Kidney (tissue), 22 donors: ENCODE measurements at regions of chr2 and their contacts with region 1.

Region 1: DNA sequence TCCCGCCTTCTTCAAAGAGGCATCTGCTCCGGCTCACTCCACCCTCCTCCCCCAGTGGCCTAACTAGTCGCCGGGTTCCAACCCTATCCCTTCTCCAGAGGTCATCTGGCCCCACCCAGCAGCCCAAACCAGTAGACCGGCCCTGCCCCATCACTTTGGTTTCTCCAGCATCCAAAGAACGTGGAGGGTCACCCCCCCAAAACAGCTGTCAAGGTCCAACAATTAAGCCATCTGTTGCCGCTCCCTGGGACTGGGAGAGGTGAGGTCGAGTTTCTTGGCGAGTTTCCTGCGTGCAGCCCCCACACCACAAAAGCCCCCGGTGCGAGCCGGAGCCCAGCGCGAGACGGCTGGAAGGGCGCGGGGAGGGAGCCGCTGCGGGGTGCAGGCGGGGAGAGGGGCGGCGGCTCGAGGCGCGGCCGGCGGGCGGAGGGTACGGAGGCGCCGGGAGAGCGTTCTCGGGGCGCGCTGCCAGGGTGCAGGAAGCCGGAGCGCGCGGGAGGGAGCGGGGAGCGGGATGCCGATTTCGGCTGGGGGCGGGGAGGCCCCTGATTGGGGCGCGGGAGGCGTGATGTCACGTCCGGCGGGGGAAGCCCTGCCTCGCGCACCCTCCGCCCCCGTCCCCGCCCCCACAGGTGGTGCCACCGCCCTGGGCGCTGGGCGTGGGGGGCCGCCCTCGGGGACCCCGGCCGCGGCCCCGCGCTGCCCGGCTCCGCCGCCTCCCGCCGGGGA is 571 bp upstream of the GPC1 start:
- DNase-seq: peak; percentile 92 to 98 (median 95)
- H3K4me3 ChIP-seq: peak overlapping the region in 1 of 3 donors; percentile 41
- H3K27ac ChIP-seq: no peak overlapping the region
- H3K4me1 ChIP-seq: peaks cover 0 to 9% (median 3%) of the 10 kb centered on the region in 3 donors
- H3K27me3 ChIP-seq: no peaks in the 10 kb centered on the region
- CTCF ChIP-seq: no peak

Region 2: GRCh38 chr2:240232961-240233893 is 201.7 kb before region 1 on chr2:
- intact Hi-C with region 1: loop called (anchors 5 kb)
- DNase-seq: peak; percentile 80 to 98 (median 86)
- H3K4me3 ChIP-seq: no peak overlapping the region
- H3K27ac ChIP-seq: no peak overlapping the region
- H3K4me1 ChIP-seq: peaks cover 0 to 7% (median 0%) of the 10 kb centered on the region in 3 donors
- H3K27me3 ChIP-seq: no peaks in the 10 kb centered on the region
- CTCF ChIP-seq: peak; percentile 71

Region 3: GRCh38 chr2:240387669-240388358 is 47.1 kb before region 1 on chr2:
- intact Hi-C with region 1: no loop called
- DNase-seq: peak in 3 of 5 donors; percentile 22 to 87 (median 42)
- H3K4me3 ChIP-seq: no peak overlapping the region
- H3K27ac ChIP-seq: no peak overlapping the region
- H3K4me1 ChIP-seq: no peaks in the 10 kb centered on the region
- H3K27me3 ChIP-seq: no peaks in the 10 kb centered on the region
- CTCF ChIP-seq: no peak